Panc1 (cell line): ENCODE measurements at regions of chr16 and their contacts with region 1.

Region 1: GRCh38 chr16:20364051-20364450 is 11.5 kb upstream of the UMOD start:
- DNase-seq: no peak
- ATAC-seq: no peak
- H3K4me3 ChIP-seq: no peak overlapping the region
- H3K27ac ChIP-seq: no peak overlapping the region
- H3K4me1 ChIP-seq: no peaks in the 10 kb centered on the region
- H3K27me3 ChIP-seq: peaks cover 25% of the 10 kb centered on the region
- CTCF ChIP-seq: no peak

Region 2: DNA sequence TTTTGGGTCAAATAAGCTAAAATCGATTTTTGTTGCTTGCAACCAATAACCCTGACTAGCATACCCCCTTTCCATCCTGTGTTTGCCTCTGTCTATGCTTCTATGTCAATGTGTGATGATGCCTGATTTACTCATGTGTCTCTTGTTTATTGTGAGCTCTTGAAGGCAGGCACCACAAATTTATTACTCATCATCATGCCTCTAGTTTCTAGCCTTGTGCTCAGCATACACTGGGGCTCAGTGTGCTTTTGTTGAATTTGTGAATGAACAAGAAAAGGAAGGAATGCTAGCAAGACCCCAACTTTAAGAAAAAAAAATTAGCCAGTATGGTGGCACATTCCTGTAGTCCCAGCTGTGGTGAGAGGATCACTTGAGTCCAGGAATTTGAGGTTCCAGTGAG is 171.2 kb before region 1 on chr16:
- CTCF ChIA-PET with region 1: no interaction called
- POLR2A ChIA-PET with region 1: interaction called, 14 read pairs
- in situ Hi-C with region 1: no loop called
- intact Hi-C with region 1: no loop called
- DNase-seq: no peak
- ATAC-seq: no peak
- H3K4me3 ChIP-seq: no peak overlapping the region
- H3K27ac ChIP-seq: no peak overlapping the region
- H3K4me1 ChIP-seq: no peaks in the 10 kb centered on the region
- H3K27me3 ChIP-seq: peaks cover 21% of the 10 kb centered on the region
- CTCF ChIP-seq: no peak

Region 3: DNA sequence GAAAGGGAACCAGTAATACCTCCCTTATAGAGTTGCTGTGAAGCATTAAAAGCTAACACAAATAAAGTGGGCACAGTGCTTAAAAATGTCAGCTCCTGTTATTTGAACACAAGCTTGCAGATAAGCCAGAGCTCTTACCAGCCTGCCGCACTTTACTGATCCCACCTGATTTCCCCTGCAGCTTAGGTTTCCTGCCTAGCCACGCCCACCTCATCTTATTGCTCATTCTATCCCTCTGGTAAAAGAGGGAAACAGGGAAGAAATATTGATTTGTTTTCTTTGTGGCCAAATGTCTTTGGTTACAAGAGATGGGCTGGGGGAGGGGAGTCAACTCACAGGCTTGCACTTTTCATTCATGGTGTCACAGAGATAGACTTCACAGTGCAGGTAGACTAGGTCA is 27.1 kb before region 1 on chr16:
- CTCF ChIA-PET with region 1: no interaction called
- POLR2A ChIA-PET with region 1: no interaction called
- in situ Hi-C with region 1: no loop called
- intact Hi-C with region 1: no loop called
- DNase-seq: no peak
- ATAC-seq: no peak
- H3K4me3 ChIP-seq: no peak overlapping the region
- H3K27ac ChIP-seq: no peak overlapping the region
- H3K4me1 ChIP-seq: no peaks in the 10 kb centered on the region
- H3K27me3 ChIP-seq: peaks cover 17% of the 10 kb centered on the region
- CTCF ChIP-seq: no peak

Region 4: GRCh38 chr16:20349615-20350014 is 14.4 kb before region 1 on chr16:
- CTCF ChIA-PET with region 1: no interaction called
- POLR2A ChIA-PET with region 1: interaction called, 12 read pairs
- in situ Hi-C with region 1: no loop called
- intact Hi-C with region 1: no loop called
- DNase-seq: no peak
- ATAC-seq: no peak
- H3K4me3 ChIP-seq: no peak overlapping the region
- H3K27ac ChIP-seq: no peak overlapping the region
- H3K4me1 ChIP-seq: no peaks in the 10 kb centered on the region
- H3K27me3 ChIP-seq: peaks cover 4% of the 10 kb centered on the region
- CTCF ChIP-seq: peak; percentile 40

Region 5: DNA sequence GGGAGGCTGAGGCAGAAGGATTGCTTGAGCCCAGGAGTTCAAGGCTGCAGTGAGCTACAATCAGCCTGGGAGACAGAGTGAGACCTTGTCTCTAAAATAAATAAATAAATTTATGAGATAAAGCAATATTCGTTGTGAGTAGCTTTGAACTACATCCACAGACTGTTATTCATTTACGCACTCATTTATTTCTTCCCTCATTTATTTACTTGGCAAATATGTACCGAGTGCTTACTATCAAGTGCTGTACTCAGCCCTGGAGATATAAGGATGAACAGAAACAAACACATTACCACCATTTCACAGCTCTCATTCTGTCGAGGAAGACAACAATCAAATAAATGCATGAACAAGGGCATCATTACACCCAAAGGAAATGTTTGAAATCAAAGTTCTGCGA is 13.1 kb after region 1 on chr16:
- CTCF ChIA-PET with region 1: no interaction called
- POLR2A ChIA-PET with region 1: no interaction called
- in situ Hi-C with region 1: no loop called
- intact Hi-C with region 1: no loop called
- DNase-seq: no peak
- ATAC-seq: no peak
- H3K4me3 ChIP-seq: no peak overlapping the region
- H3K27ac ChIP-seq: no peak overlapping the region
- H3K4me1 ChIP-seq: no peaks in the 10 kb centered on the region
- H3K27me3 ChIP-seq: peaks cover 13% of the 10 kb centered on the region
- CTCF ChIP-seq: no peak

Region 6: GRCh38 chr16:20409398-20410120 is 45.5 kb after region 1 on chr16 and contains the start of gene ACSM5:
- CTCF ChIA-PET with region 1: no interaction called
- POLR2A ChIA-PET with region 1: no interaction called
- in situ Hi-C with region 1: no loop called
- intact Hi-C with region 1: no loop called
- DNase-seq: no peak
- ATAC-seq: peak; percentile 48; the same call in 1 of the 2 replicates
- H3K4me3 ChIP-seq: no peak within 1 kb of the TSS
- H3K27ac ChIP-seq: no peak within 1 kb of the TSS
- H3K4me1 ChIP-seq: no peaks in the 10 kb centered on the region
- H3K27me3 ChIP-seq: peaks cover 2% of the 10 kb centered on the region; the same call in 1 of the 2 replicates
- CTCF ChIP-seq: no peak
- total RNA-seq, gene ACSM5: 0.21 TPM

Region 7: DNA sequence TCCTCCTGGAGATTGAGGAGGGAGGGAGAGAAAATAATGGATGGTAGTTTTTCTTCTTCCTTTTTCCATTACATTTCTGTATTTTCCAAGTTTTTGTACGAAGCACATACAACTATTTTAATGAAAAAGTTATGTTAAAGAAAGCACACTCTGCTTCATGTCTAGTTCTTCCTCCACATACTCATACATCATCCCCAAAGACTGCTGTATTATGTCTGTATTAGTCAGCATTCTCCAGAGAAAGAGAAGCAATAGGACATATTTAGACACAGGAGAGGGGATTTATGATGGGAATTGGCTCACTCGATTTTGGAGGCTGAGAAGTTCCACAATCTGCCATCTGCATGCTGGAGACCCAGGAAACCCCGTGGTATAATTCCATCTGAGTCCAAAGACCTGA is 77.1 kb after region 1 on chr16:
- CTCF ChIA-PET with region 1: no interaction called
- POLR2A ChIA-PET with region 1: no interaction called
- in situ Hi-C with region 1: no loop called
- intact Hi-C with region 1: no loop called
- DNase-seq: no peak
- ATAC-seq: no peak
- H3K4me3 ChIP-seq: no peak overlapping the region
- H3K27ac ChIP-seq: no peak overlapping the region
- H3K4me1 ChIP-seq: no peaks in the 10 kb centered on the region
- H3K27me3 ChIP-seq: peaks cover 6% of the 10 kb centered on the region
- CTCF ChIP-seq: no peak